GM12878 (cell line): ENCODE measurements at regions of chr10 and their contacts with region 1.

Region 1: DNA sequence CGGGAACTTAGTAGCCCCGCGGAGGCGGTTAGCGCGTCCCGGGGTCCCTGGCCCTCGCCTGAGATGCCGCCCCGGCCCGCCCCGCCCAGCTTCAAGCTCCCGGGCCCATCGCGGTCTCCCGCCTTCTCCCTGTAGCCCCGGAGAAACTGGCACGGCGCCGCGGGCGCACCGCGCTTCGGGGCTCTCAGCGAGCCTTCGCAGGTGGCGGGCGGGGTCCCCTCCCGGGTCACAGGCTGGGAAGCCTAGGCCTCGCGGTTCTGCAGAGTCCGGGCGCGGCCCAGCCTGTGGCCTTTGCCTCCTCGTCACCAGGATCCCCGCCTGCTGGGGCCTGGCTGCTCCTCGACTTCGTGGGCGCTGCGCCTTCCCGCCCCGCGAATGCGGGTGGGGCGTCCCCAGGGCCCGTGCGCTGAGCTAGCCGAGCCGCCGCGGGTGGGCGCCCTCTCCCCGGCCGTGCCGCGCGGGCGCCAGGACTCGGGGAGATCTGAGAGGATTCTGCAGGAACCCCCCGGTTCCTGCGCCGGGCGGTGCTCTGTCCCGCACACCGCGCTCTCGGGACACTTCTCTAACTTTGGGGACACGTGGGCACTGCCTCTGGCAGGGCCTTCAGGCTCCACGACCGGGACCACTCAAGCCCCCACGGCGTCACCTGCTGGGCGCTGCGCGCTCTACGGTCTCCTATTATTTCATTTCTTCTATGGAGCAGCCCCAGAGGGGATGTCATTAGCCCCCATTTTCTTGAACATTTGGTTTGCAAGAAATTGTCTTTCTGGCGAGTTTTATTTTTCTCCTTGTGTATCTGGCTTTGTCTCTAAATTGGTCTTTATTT is 682 bp upstream of the RGS10 start:
- DNase-seq: no peak
- ATAC-seq: peak; percentile 49
- H3K4me3 ChIP-seq: peak overlapping the region; percentile 84
- H3K27ac ChIP-seq: peak overlapping the region; percentile 59
- H3K4me1 ChIP-seq: peaks cover 18% of the 10 kb centered on the region
- H3K27me3 ChIP-seq: no peaks in the 10 kb centered on the region
- CTCF ChIP-seq: peak; percentile 48 to 70 (median 66)
- EP300 ChIP-seq: no peak
- POLR2A ChIP-seq: no peak
- RAD21 ChIP-seq: peak; percentile 50

Region 2: DNA sequence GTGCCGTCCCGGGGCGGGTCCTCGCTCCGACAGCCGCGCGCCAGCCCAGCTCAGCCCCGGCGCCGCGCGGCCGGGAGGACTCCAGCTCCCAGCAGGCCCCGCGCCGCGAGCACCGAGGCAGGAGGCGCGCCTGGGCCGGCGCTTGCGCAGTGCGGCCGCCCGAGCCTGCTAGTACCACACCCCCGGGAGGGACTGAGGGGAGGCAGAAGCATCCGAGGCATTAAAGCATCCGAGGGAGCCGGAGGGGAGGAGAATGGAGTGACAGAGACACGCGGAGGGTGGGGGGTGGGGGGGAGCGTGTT is 335.9 kb before region 1 on chr10 and contains the start of gene GRK5:
- CTCF ChIA-PET with region 1: interaction called, 11 read pairs
- POLR2A ChIA-PET with region 1: no interaction called
- RAD21 ChIA-PET with region 1: interaction called, 12 read pairs
- SMC1A ChIA-PET with region 1: no interaction called
- in situ Hi-C with region 1: no loop called
- intact Hi-C with region 1: loop called (anchors 5 kb)
- DNase-seq: peak; percentile 86
- ATAC-seq: peak; percentile 85
- H3K4me3 ChIP-seq: peak within 1 kb of the TSS; percentile 80
- H3K27ac ChIP-seq: peak within 1 kb of the TSS; percentile 85
- H3K4me1 ChIP-seq: peaks cover 11% of the 10 kb centered on the region
- H3K27me3 ChIP-seq: no peaks in the 10 kb centered on the region
- CTCF ChIP-seq: no peak
- EP300 ChIP-seq: no peak
- POLR2A ChIP-seq: peak; percentile 84
- RAD21 ChIP-seq: no peak
- polyA plus RNA-seq, gene GRK5: 0.11 to 0.86 TPM

Region 3: DNA sequence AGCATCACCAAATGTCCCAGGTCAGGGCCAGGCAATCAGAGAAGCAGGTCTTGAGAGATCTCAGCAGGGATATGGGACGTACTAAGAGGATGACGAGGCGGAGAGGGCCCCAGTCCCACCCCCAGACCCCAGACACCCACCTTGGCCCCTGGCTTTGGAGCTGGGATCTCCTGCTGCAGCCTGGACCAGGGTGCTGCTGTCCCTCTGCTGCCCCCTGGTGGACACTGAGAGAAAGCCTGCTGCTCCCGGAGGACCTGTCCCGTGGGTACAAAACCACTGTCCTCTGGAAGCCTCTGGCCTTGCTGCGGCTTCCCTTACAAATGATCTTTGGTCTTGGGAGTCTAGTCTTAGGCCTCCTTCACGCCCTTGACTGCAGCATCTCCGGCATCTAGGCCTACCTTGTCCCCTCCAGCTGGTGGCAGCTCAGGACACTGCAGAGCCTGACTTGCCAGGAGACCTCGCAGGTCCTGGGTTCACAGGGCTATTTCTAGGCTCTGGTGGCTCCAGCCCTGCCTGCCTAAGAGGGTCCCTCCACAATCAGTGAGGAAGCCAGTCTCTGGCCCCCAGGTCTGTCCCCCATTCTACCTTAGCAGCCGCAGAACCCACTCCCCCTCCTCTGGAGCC is 97.8 kb before region 1 on chr10:
- CTCF ChIA-PET with region 1: interaction called, 11 read pairs
- POLR2A ChIA-PET with region 1: no interaction called
- RAD21 ChIA-PET with region 1: no interaction called
- SMC1A ChIA-PET with region 1: interaction called, 4 read pairs
- in situ Hi-C with region 1: no loop called
- intact Hi-C with region 1: loop called (anchors 5 kb)
- DNase-seq: no peak
- ATAC-seq: peak; percentile 89
- H3K4me3 ChIP-seq: no peak overlapping the region
- H3K27ac ChIP-seq: no peak overlapping the region
- H3K4me1 ChIP-seq: peaks cover 14% of the 10 kb centered on the region
- H3K27me3 ChIP-seq: no peaks in the 10 kb centered on the region
- CTCF ChIP-seq: peak; percentile 86 to 92 (median 89)
- EP300 ChIP-seq: no peak
- POLR2A ChIP-seq: no peak
- RAD21 ChIP-seq: peak; percentile 78

Region 4: GRCh38 chr10:119502209-119502608 is 41.0 kb before region 1 on chr10:
- CTCF ChIA-PET with region 1: interaction called, 9 read pairs
- POLR2A ChIA-PET with region 1: interaction called, 4 read pairs
- RAD21 ChIA-PET with region 1: interaction called, 10 read pairs
- SMC1A ChIA-PET with region 1: interaction called, 10 read pairs
- in situ Hi-C with region 1: no loop called
- intact Hi-C with region 1: no loop called
- DNase-seq: no peak
- ATAC-seq: peak; percentile 77
- H3K4me3 ChIP-seq: no peak overlapping the region
- H3K27ac ChIP-seq: peak overlapping the region; percentile 55
- H3K4me1 ChIP-seq: peaks cover 19% of the 10 kb centered on the region
- H3K27me3 ChIP-seq: no peaks in the 10 kb centered on the region
- CTCF ChIP-seq: no peak
- EP300 ChIP-seq: no peak
- POLR2A ChIP-seq: no peak
- RAD21 ChIP-seq: no peak

Region 5: DNA sequence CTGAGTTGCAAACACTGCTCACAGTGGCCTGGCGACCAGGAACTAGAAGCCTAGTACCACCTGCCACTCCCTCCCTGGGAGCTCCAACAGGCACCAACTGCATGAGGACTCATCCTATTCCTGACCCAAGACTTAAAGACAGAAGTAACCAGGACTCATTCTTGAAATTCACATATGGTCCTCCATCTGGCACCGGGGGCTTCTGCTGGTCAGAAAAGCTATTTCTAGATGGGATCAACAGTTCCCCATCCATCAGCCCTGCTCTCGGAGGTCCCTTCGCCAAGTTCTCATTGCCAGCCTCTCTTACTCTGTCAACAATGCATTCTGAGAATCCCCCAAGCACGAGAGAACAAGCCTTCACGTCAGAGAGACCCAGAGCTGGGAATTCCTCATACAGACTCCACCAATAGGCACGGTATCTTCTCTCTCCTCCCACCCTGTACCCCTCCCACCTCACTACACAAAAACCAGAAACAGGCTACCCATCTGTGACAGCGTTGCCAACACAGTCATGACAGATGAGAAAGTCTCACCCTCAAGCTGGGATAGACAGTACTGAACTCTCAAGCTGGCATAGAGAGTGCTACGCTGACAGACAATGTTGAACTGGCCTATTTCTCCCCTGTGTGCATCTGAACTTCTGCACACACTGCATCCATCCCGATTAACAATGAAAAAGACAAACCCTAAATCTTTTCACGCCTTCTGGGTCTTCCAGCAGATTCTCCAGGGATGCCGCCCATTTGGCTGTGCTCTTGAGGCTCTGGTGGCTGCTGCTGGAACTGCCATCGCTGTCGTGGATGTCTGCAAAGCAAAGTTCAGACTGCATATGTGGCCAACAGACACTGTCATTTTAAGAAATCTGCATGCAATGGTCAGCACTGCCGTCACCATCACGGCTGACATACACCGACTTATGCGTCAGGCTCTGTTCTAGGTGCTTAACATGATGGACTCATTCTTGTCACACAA is 16.3 kb before region 1 on chr10:
- CTCF ChIA-PET with region 1: interaction called, 20 read pairs
- POLR2A ChIA-PET with region 1: interaction called, 6 read pairs
- RAD21 ChIA-PET with region 1: interaction called, 15 read pairs
- SMC1A ChIA-PET with region 1: interaction called, 13 read pairs
- in situ Hi-C with region 1: no loop called
- intact Hi-C with region 1: no loop called
- DNase-seq: no peak
- ATAC-seq: peak; percentile 65
- H3K4me3 ChIP-seq: no peak overlapping the region
- H3K27ac ChIP-seq: no peak overlapping the region; the same call in 1 of the 2 replicates
- H3K4me1 ChIP-seq: no peaks in the 10 kb centered on the region; the same call in 1 of the 2 replicates
- H3K27me3 ChIP-seq: no peaks in the 10 kb centered on the region
- CTCF ChIP-seq: peak in 1 of 3 experiments; percentile 24; a peak in 2 of 6 replicates
- EP300 ChIP-seq: no peak
- POLR2A ChIP-seq: no peak
- RAD21 ChIP-seq: no peak

Region 6: GRCh38 chr10:119575506-119575905 is 32.3 kb after region 1 on chr10:
- CTCF ChIA-PET with region 1: interaction called, 12 read pairs
- POLR2A ChIA-PET with region 1: interaction called, 5 read pairs
- RAD21 ChIA-PET with region 1: no interaction called
- SMC1A ChIA-PET with region 1: interaction called, 4 read pairs
- in situ Hi-C with region 1: no loop called
- intact Hi-C with region 1: no loop called
- DNase-seq: no peak
- ATAC-seq: no peak
- H3K4me3 ChIP-seq: no peak overlapping the region
- H3K27ac ChIP-seq: no peak overlapping the region
- H3K4me1 ChIP-seq: no peaks in the 10 kb centered on the region
- H3K27me3 ChIP-seq: no peaks in the 10 kb centered on the region
- CTCF ChIP-seq: no peak
- EP300 ChIP-seq: no peak
- POLR2A ChIP-seq: no peak
- RAD21 ChIP-seq: no peak

Region 7: DNA sequence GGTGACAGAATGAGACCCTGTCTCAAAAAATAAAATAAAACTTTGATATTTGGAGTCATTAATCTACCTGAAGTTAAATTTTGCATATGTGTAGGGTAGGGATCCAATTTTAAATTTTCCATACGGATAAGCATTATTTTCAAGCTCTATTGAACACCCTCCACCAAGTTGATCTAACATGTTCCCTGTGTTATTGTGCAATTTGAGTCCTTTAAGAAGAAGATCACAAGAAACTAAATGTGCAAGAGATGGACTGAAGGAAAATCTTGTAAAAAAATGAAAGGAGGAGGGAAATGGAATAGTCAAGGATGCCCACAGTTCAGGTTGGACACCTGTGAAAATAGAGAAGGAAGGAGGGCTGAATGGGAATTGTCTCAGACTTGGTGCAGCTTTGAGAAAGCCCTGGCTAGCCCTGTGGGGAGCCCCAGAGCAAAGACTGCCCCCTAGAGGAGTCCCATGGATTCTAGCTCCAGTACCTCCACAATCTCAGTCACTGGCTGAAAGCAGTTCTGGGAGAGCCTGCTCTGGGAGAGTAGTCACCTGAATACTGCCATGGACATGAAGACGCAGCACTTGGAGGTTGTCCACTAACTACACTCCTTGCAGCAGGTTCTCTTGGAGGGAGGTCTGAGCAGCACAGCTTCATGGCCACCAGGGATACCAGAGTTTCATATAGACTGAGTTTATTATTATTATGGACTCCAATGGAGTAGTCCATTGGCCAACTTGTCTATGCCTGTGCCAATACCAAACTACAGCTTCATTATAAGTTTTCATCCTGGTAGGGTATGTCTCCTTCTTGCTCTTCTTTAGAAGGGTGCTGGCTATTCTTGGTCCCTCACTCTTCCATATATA is 59.3 kb after region 1 on chr10:
- CTCF ChIA-PET with region 1: interaction called, 13 read pairs
- POLR2A ChIA-PET with region 1: interaction called, 6 read pairs
- RAD21 ChIA-PET with region 1: interaction called, 7 read pairs
- SMC1A ChIA-PET with region 1: interaction called, 7 read pairs
- in situ Hi-C with region 1: no loop called
- intact Hi-C with region 1: loop called (anchors 2 kb)
- DNase-seq: no peak
- ATAC-seq: peak; percentile 73
- H3K4me3 ChIP-seq: no peak overlapping the region
- H3K27ac ChIP-seq: no peak overlapping the region
- H3K4me1 ChIP-seq: peaks cover 7% of the 10 kb centered on the region; the same call in 1 of the 2 replicates
- H3K27me3 ChIP-seq: no peaks in the 10 kb centered on the region
- CTCF ChIP-seq: peak; percentile 65 to 79 (median 69)
- EP300 ChIP-seq: no peak
- POLR2A ChIP-seq: no peak
- RAD21 ChIP-seq: peak; percentile 44

Region 8: DNA sequence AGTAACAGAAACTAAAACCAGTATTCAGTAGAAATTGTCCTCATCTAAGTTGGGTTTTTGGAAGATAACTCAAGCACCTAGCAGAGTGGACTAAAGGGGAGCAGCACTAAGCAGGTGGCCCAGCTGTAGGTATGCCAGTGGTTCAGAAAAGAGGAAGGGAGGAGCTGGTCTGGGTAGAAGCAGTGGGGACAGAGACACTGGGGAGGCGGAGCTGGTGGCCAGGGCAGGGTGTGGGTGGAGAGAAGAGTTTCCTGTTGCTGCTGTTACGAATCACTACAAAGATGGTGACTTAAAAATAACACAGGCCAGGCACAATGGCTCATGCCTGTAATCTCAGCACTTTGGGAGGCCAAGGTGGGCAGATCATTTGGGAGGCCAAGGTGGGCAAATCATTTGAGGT is 1444.2 kb after region 1 on chr10:
- CTCF ChIA-PET with region 1: no interaction called
- POLR2A ChIA-PET with region 1: no interaction called
- RAD21 ChIA-PET with region 1: no interaction called
- SMC1A ChIA-PET with region 1: no interaction called
- in situ Hi-C with region 1: no loop called
- intact Hi-C with region 1: no loop called
- DNase-seq: no peak
- ATAC-seq: peak; percentile 34; the same call in 2 of the 3 replicates
- H3K4me3 ChIP-seq: no peak overlapping the region
- H3K27ac ChIP-seq: no peak overlapping the region
- H3K4me1 ChIP-seq: no peaks in the 10 kb centered on the region
- H3K27me3 ChIP-seq: no peaks in the 10 kb centered on the region
- CTCF ChIP-seq: no peak
- EP300 ChIP-seq: no peak
- POLR2A ChIP-seq: no peak
- RAD21 ChIP-seq: no peak